Posterior vena cava (tissue), 2 donors: ENCODE measurements at regions of chr2 and their contacts with region 1.

Region 1: DNA sequence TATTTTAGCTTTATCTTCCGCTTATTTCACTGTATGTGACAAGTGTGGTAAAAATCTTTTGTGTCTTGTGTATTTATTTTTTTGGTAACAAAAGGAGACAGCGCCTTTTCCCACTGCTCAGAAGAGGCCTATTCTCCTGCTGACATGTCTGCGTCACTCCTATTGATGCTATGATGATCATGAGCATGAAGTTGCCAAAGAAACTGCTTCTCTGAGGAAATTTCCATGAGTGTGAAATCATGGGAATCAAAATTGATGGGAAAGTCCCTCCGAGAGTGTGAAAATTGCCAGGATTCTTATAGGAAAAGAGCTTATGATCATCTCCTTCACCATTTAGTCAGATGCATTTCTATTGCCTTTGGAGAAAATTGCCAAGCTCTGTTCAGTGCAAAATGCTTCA is 36.5 kb upstream of the DARS1 start:
- DNase-seq: no peak

Region 2: DNA sequence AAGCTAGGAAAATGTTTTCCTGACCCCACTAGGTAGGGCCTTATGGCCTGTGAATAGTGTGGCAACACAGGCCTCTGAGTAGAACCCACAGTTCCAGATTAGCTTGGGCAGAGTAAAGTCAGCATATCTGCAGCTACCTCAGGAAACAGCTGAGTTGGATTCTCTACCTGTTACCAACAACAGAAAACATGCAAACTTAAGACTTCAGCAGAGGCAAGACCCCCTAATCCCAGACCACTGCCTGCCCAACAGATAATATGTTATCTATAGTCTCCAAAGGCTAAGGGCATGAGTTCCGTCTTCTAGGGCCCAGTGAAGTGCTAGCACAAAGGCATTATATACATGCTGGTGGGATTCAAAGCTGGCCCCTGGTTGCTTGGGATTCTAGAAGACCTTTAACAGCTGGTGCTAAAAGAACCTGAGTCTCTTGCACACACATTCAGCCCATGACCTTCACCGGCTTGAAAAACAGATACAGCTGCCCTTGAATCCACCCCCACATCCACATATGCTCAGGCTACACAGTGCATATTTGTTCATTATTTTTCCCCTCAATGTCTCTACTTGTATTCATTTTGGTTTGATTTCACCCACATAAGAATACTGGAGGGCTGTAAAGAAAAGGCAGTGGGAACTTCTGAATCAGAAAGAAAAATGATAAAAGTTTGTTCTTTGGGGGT is 293.8 kb before region 1 on chr2:
- intact Hi-C with region 1: no loop called
- DNase-seq: no peak

Region 3: DNA sequence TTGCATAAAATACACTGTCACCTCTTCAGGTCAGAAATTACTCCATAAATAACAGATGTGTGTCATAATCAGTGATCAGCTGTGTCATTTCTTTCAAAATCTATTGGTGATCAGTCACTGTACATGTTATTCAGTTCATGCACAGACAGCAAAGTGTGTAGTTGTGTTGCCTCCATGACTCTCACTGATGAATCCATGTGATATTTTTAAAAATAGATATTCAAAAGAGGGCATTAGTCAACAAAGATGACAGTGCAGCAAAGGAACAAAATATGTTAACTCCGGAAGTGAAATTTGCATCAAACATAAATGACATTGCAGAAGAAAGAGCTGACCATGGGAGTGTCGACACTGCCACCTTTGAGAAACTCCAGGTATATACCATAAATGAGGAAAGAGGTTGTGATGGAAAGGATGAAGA is 128.6 kb before region 1 on chr2:
- intact Hi-C with region 1: no loop called
- DNase-seq: no peak

Region 4: DNA sequence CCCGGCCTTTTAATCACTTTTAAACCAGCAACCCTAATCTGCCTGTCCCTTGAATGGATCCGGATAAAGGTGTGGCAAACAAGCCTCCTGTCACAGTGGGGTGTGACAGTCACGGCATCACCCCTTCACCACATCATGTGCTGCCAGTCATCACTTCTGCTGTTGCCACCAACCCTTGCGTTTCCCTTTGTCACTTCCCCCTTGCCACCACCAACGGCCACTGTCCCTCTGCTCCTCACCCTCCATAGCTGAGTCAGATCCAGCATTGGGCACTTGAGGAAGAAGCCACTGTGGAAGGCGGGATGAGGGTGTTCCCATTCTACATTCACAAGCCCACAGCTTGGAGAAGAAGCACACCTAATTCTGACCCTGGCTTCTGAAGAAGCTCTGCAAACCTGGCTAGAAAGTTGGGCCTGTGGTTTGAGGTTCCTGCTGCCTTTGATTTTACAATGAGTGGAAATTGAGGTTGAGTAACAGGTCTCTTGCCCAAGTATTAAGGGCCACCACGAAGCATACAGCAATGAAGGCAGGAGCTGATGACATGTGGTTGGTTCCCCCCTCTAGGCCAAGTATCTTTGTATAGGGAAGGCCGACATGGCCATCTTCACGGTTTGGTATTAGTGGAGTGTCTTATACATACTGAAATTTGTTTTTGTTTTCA is 13.6 kb before region 1 on chr2:
- intact Hi-C with region 1: loop called in 1 of 2 experiments (anchors 1 kb)
- DNase-seq: peak; percentile 88